Psoas muscle (tissue), 8 donors: ENCODE measurements at regions of chr13 and their contacts with region 1.

Region 1: GRCh38 chr13:32707471-32707870 is 121.2 kb downstream of the PDS5B start:
- DNase-seq: no peak
- ATAC-seq: no peak
- H3K4me3 ChIP-seq: no peak overlapping the region
- H3K27ac ChIP-seq: no peak overlapping the region
- H3K4me1 ChIP-seq: no peaks in the 10 kb centered on the region
- H3K27me3 ChIP-seq: no peaks in the 10 kb centered on the region
- CTCF ChIP-seq: no peak

Region 2: GRCh38 chr13:32779119-32779518 is 71.6 kb after region 1 on chr13:
- intact Hi-C with region 1: loop called in 1 of 2 experiments (anchors 10 kb)
- DNase-seq: no peak
- ATAC-seq: no peak
- H3K4me3 ChIP-seq: no peak overlapping the region
- H3K27ac ChIP-seq: no peak overlapping the region
- H3K4me1 ChIP-seq: no peaks in the 10 kb centered on the region
- H3K27me3 ChIP-seq: no peaks in the 10 kb centered on the region
- CTCF ChIP-seq: no peak

Region 3: GRCh38 chr13:32804673-32805230 is 97.3 kb after region 1 on chr13:
- intact Hi-C with region 1: no loop called
- DNase-seq: no peak
- ATAC-seq: no peak
- H3K4me3 ChIP-seq: no peak overlapping the region
- H3K27ac ChIP-seq: no peak overlapping the region
- H3K4me1 ChIP-seq: no peaks in the 10 kb centered on the region
- H3K27me3 ChIP-seq: no peaks in the 10 kb centered on the region
- CTCF ChIP-seq: no peak